Gastrocnemius medialis (tissue), 4 donors: ENCODE measurements at regions of chr9 and their contacts with region 1.

Region 1: GRCh38 chr9:84079994-84080393 is 99.4 kb downstream of the RMI1 start:
- DNase-seq: no peak
- ATAC-seq: no peak
- H3K4me3 ChIP-seq: no peak overlapping the region
- H3K27ac ChIP-seq: no peak overlapping the region
- H3K4me1 ChIP-seq: peaks cover 0 to 3% of the 10 kb centered on the region in 2 donors
- H3K27me3 ChIP-seq: no peaks in the 10 kb centered on the region
- CTCF ChIP-seq: no peak
- POLR2A ChIP-seq: no peak

Region 2: GRCh38 chr9:84139296-84140070 is 59.5 kb after region 1 on chr9:
- in situ Hi-C with region 1: loop called in 1 of 4 experiments (anchors 10 kb)
- intact Hi-C with region 1: no loop called
- DNase-seq: peak in 1 of 2 donors; percentile 15
- ATAC-seq: peak in 1 of 2 donors; percentile 43
- H3K4me3 ChIP-seq: no peak overlapping the region
- H3K27ac ChIP-seq: no peak overlapping the region
- H3K4me1 ChIP-seq: peaks cover 12 to 13% of the 10 kb centered on the region in 2 donors
- H3K27me3 ChIP-seq: peaks cover 28 to 41% (median 31%) of the 10 kb centered on the region in 3 donors
- CTCF ChIP-seq: no peak
- POLR2A ChIP-seq: no peak

Region 3: GRCh38 chr9:84697509-84698114 is 617.6 kb after region 1 on chr9:
- in situ Hi-C with region 1: no loop called
- intact Hi-C with region 1: no loop called
- DNase-seq: peak; percentile 15 to 18
- ATAC-seq: no peak
- H3K4me3 ChIP-seq: no peak overlapping the region
- H3K27ac ChIP-seq: no peak overlapping the region
- H3K4me1 ChIP-seq: no peaks in the 10 kb centered on the region
- H3K27me3 ChIP-seq: no peaks in the 10 kb centered on the region
- CTCF ChIP-seq: peak in 3 of 5 experiments; percentile 41 to 52 (median 47)
- POLR2A ChIP-seq: no peak